PC-9 (cell line): ENCODE measurements at regions of chr17 and their contacts with region 1.

Region 1: DNA sequence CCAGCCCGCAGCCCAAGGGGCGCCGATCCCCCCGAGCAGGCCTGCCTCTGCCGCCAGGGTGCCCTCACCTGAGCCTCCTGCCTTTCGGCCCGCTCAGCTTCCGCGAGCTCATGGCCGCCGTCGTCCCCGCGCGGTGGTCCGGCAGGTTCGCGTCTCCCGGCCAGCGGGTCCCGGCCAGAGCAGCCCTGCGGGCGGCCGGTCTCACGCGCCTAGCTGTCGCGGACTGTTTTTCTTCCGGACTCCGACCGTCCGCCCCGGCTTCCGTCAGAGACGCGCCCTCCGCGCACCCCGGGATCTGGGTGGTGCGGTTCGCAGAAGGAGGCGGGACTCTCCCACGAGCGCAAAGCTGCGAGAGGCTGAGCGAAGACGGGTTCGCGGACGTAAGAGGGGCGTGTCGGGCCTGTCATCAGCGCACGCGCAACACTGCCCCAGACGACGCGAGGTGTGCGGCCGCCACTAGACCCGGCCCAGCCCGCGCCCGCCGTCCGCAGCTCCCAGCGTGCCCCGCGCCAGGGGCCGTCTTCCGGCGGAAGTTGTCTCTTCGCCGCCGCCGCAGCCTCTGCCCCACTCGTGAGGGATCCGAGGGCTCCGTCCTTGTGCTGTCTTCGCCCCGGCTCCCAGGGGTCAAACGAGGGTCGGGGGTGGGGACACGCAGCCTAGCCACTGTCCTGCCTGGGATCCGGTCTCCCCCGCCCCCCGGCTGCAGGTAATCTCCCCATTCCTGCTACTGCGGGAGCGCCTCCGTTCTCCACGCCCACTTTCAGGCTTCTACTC is at the start of gene INPP5K:
- DNase-seq: peak; percentile 92 to 99
- H3K4me3 ChIP-seq: peak within 1 kb of the TSS; percentile 72
- H3K27ac ChIP-seq: peak within 1 kb of the TSS; percentile 63
- H3K4me1 ChIP-seq: peaks cover 13% of the 10 kb centered on the region
- H3K27me3 ChIP-seq: no peaks in the 10 kb centered on the region
- CTCF ChIP-seq: no peak
- total RNA-seq, gene INPP5K: 41.9 and 42.9 TPM in 2 replicates

Region 2: DNA sequence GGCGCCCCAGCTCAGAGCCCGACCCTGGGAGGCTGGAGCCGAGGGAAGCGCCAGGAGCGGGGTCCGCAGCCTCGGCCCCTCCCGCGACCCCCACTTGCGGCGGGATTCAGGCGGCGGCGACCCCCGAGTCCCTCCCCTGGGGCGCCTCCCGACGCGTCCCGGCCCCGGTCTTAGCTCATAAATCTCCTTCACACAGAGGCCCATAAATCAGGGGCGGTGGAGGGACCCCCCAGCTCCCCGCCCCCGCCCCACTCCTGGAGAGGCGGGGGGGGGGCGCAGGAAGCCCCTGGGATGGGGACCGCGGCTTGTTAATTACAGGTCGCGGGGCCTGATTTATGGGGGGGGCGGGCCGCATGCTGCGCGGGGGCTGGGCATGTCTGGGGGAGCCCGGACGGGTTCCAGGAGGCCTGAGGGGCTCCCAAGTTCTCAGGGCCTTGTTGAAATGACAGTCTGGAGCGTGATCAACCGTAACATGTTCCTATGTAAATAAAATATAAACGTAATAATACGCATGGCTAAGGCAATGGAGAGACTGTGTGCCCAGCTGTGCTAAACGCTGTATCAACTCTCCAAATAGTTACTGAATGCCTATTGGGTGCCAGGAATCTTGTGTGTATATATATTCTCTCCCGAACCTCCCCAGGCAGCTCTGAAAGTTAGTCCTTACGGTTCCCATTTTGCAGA is 256.3 kb before region 1 on chr17:
- CTCF ChIA-PET with region 1: no interaction called
- POLR2A ChIA-PET with region 1: interaction called, 4 read pairs
- intact Hi-C with region 1: loop called (anchors 5 kb)
- DNase-seq: no peak
- H3K4me3 ChIP-seq: peak overlapping the region; percentile 58; the same call in 1 of the 2 replicates
- H3K27ac ChIP-seq: no peak overlapping the region
- H3K4me1 ChIP-seq: peaks cover 10% of the 10 kb centered on the region; the same call in 1 of the 2 replicates
- H3K27me3 ChIP-seq: peaks cover 5% of the 10 kb centered on the region; the same call in 1 of the 2 replicates
- CTCF ChIP-seq: no peak

Region 3: GRCh38 chr17:1275962-1276736 is 240.4 kb before region 1 on chr17:
- CTCF ChIA-PET with region 1: no interaction called
- POLR2A ChIA-PET with region 1: no interaction called
- intact Hi-C with region 1: loop called (anchors 1 kb)
- DNase-seq: peak in 1 of 2 experiments; percentile 67
- H3K4me3 ChIP-seq: no peak overlapping the region
- H3K27ac ChIP-seq: no peak overlapping the region
- H3K4me1 ChIP-seq: no peaks in the 10 kb centered on the region
- H3K27me3 ChIP-seq: peaks cover 32% of the 10 kb centered on the region
- CTCF ChIP-seq: peak; percentile 93

Region 4: GRCh38 chr17:1455797-1456599 is 60.6 kb before region 1 on chr17 and contains the start of gene CRK:
- CTCF ChIA-PET with region 1: interaction called, 10 read pairs
- POLR2A ChIA-PET with region 1: no interaction called
- intact Hi-C with region 1: loop called (anchors 1 kb)
- DNase-seq: peak; percentile 84 to 99
- H3K4me3 ChIP-seq: peak within 1 kb of the TSS; percentile 98
- H3K27ac ChIP-seq: peak within 1 kb of the TSS; percentile 59
- H3K4me1 ChIP-seq: peaks cover 27% of the 10 kb centered on the region
- H3K27me3 ChIP-seq: no peaks in the 10 kb centered on the region
- CTCF ChIP-seq: no peak
- total RNA-seq, gene CRK: 57.1 and 57.9 TPM in 2 replicates

Region 5: GRCh38 chr17:1488030-1488863 is 28.3 kb before region 1 on chr17:
- CTCF ChIA-PET with region 1: interaction called, 3 read pairs
- POLR2A ChIA-PET with region 1: interaction called, 5 read pairs
- intact Hi-C with region 1: loop called (anchors 2 kb)
- DNase-seq: peak; percentile 60 to 97
- H3K4me3 ChIP-seq: peak overlapping the region; percentile 56
- H3K27ac ChIP-seq: peak overlapping the region; percentile 45
- H3K4me1 ChIP-seq: peaks cover 58% of the 10 kb centered on the region
- H3K27me3 ChIP-seq: no peaks in the 10 kb centered on the region
- CTCF ChIP-seq: no peak

Region 6: DNA sequence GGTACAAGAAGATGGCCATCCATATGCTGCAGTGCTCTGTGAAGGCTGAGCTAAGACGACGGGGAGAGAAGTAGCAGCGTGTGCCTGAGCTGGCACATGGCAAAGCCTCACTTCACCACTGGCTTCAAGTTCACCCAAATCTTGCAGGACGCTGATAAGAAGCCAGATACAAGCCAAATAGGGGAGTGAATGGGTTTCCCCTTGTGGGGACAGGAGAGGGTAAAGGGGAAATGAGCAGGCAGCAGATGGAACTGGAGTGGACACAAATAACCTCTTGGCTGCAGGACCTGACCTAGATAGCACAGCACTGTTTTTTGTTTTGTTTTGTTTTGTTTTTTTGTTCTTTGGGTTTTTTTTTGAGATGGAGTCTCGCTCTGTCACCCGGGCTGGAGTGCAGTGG is 67.0 kb after region 1 on chr17:
- CTCF ChIA-PET with region 1: no interaction called
- POLR2A ChIA-PET with region 1: no interaction called
- intact Hi-C with region 1: no loop called
- DNase-seq: no peak
- H3K4me3 ChIP-seq: no peak overlapping the region
- H3K27ac ChIP-seq: no peak overlapping the region
- H3K4me1 ChIP-seq: no peaks in the 10 kb centered on the region
- H3K27me3 ChIP-seq: no peaks in the 10 kb centered on the region
- CTCF ChIP-seq: no peak

Region 7: DNA sequence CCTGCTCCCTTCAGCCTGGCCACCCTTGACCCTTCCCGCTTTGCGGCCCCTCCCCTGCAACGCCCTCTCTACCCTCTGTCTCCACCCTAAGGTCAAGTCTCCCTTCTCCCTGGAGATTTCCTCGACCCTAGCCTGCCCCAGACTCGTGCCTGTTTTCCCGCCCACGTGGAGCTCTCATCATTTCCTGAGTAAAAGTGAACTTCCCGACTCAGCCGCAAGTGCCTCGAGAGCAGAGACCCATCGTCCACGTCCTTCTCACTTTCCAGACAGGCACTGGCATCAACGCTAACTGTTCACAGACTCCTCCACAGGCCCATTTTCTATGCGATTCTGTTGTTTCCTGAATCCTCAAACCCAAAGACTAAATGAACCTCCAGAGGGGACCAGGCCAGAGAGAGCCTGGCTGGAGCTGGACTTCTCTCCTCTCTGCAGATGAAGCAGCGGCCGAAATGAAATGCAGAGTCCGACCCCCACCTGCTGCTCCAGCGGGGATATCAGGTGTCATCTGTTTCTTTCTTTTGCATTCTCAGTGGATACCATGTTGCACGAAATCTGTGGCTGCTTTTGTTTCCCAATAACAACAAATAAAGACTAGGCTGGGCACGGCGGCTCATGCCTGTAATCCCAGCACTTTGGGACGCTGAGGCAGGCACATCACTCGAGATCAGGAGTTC is 456.0 kb after region 1 on chr17:
- CTCF ChIA-PET with region 1: interaction called, 10 read pairs
- POLR2A ChIA-PET with region 1: no interaction called
- intact Hi-C with region 1: no loop called
- DNase-seq: no peak
- H3K4me3 ChIP-seq: no peak overlapping the region
- H3K27ac ChIP-seq: no peak overlapping the region
- H3K4me1 ChIP-seq: no peaks in the 10 kb centered on the region
- H3K27me3 ChIP-seq: no peaks in the 10 kb centered on the region
- CTCF ChIP-seq: no peak